ENCODE measurements at regions of chr6 and their contacts with region 1.

Region 1: GRCh38 chr6:7725849-7726415 is at the start of gene BMP6:
- DNase-seq: peak; percentile 93
- H3K4me3 ChIP-seq: peak within 1 kb of the TSS; percentile 61 to 70 (median 64)
- H3K27ac ChIP-seq: peak within 1 kb of the TSS in 1 of 4 donors; percentile 8
- H3K4me1 ChIP-seq: peaks cover 33 to 50% (median 48%) of the 10 kb centered on the region in 4 donors
- H3K27me3 ChIP-seq: peaks cover 0 to 84% (median 26%) of the 10 kb centered on the region in 4 donors
- CTCF ChIP-seq: no peak
- EP300 ChIP-seq: no peak
- POLR2A ChIP-seq: no peak
- total RNA-seq, gene BMP6: 5.1 to 10.0 (median 6.9) TPM

Region 2: DNA sequence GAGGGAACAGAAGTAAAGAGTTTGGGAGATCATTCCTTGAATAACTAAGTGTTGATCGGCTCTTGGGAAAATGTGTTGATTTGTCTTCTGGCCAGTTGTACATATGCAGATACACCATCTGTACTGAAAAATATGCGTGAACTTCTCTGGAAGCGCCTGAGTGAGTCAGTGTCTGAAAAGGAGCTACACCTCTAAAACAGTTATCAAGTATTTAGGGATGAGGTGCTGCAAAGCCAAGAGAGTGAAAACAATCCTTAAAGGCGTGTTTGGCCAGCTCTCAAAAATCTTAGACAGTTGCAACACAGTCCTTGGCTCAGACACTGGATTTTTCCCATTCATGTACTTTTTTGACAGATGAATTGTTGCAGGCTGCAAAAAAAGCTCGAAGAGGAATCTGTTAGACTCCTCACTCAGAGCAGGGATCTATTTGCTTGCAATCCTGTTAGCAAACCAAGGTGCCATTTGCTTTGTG is 61.2 kb after region 1 on chr6:
- intact Hi-C with region 1: loop called (anchors 5 kb)
- DNase-seq: no peak
- H3K4me3 ChIP-seq: peak overlapping the region in 2 of 4 donors; percentile 5 to 40
- H3K27ac ChIP-seq: peak overlapping the region; percentile 44 to 80 (median 72)
- H3K4me1 ChIP-seq: peaks cover 10 to 43% (median 39%) of the 10 kb centered on the region in 4 donors
- H3K27me3 ChIP-seq: no peaks in the 10 kb centered on the region
- CTCF ChIP-seq: no peak
- EP300 ChIP-seq: no peak
- POLR2A ChIP-seq: no peak

Region 3: DNA sequence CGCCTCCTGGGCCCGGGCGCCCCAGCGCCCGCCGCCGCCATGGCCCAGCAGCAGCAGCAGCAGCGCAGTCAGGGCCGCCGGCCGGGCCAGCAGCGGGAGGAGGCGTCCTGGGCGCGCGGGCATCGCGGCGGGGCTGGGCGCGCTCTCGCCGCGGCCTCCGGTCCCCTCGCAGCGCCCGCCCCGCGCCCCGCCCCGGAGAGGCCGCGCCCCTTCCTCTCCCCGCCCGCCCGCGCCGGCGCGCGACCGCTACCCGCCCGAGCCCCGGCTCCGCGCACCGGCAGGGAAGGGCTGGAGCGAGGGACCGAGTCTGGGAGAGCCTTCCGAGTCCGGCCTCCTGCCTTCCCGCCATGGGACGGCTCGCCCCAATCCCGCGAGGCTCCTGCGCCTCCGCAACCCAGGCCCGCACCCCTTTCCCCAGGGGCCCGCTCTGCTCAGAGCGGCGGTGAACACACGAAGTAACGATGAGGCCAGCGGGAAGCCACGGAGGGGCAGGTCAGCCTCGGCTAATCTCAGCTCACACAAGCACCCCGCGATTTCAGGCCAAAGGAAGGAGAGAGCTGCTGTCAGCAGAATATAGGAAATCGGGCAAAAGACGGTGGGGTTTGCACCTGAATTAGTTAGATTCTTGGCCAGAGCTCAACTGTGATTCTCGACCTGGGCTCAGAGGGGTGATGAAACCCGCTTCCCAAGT is 184.9 kb after region 1 on chr6 and contains the start of gene TXNDC5:
- intact Hi-C with region 1: loop called (anchors 2 kb)
- DNase-seq: no peak
- H3K4me3 ChIP-seq: peak within 1 kb of the TSS; percentile 77 to 97 (median 92)
- H3K27ac ChIP-seq: peak within 1 kb of the TSS; percentile 77 to 88 (median 86)
- H3K4me1 ChIP-seq: peaks cover 23 to 32% (median 25%) of the 10 kb centered on the region in 4 donors
- H3K27me3 ChIP-seq: no peaks in the 10 kb centered on the region
- CTCF ChIP-seq: no peak
- EP300 ChIP-seq: no peak
- POLR2A ChIP-seq: no peak
- total RNA-seq, gene TXNDC5: 61.5 to 116 (median 99.0) TPM

Region 4: GRCh38 chr6:8000188-8000596 is 274.3 kb after region 1 on chr6:
- intact Hi-C with region 1: loop called (anchors 5 kb)
- DNase-seq: no peak
- H3K4me3 ChIP-seq: no peak overlapping the region
- H3K27ac ChIP-seq: no peak overlapping the region
- H3K4me1 ChIP-seq: peaks cover 6 to 25% (median 19%) of the 10 kb centered on the region in 4 donors
- H3K27me3 ChIP-seq: no peaks in the 10 kb centered on the region
- CTCF ChIP-seq: no peak
- EP300 ChIP-seq: no peak
- POLR2A ChIP-seq: no peak

Region 5: DNA sequence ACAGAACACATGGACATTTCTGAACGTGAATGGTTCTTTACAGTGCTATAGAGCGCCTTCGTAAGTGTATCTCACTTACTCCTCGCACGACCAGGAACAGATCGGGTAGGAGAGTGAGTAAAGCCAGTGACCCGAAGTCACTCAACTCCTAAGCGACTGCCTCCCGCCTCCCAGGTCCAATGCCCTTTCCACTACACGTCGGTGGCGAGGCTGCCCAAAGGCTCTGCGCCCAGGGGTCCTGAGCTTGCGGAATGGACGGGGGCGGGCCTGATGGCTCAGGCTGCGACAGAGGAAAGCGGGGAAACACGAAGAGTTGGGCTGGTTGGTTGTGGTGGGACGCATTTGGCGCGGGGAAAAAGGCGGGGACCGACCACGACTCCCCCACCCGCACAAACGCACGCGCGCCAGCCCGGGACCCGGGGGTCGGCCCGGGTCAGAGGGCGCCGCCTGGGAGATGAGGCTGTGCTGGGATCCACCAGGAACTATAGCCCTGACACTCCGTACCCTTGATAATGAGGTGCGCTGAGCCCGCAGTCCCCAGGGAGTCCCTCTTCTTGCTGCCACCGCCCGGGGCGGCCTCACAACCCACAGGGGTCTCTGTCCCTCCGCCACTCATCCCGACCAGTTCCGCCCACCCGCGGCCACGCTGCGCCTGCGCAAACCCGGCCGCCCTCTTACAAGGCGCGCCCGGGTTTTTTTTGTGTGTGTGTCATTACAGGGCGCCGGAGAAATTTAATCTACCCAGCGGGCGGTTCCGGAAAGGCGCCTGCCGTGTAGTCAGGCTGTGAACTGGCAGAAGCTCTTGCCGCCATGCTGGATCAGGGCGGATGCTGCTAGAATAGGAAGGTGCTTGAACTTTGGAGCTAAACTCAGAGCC is 338.1 kb after region 1 on chr6 and contains the start of gene BLOC1S5:
- intact Hi-C with region 1: loop called (anchors 5 kb)
- DNase-seq: peak; percentile 98
- H3K4me3 ChIP-seq: peak within 1 kb of the TSS; percentile 72 to 95 (median 88)
- H3K27ac ChIP-seq: peak within 1 kb of the TSS; percentile 81 to 93 (median 90)
- H3K4me1 ChIP-seq: peaks cover 3 to 25% (median 19%) of the 10 kb centered on the region in 4 donors
- H3K27me3 ChIP-seq: no peaks in the 10 kb centered on the region
- CTCF ChIP-seq: peak in 2 of 3 experiments; percentile 12 to 21
- EP300 ChIP-seq: no peak
- POLR2A ChIP-seq: peak; percentile 65
- total RNA-seq, gene BLOC1S5: 10.4 to 15.6 (median 11.2) TPM

Region 6: DNA sequence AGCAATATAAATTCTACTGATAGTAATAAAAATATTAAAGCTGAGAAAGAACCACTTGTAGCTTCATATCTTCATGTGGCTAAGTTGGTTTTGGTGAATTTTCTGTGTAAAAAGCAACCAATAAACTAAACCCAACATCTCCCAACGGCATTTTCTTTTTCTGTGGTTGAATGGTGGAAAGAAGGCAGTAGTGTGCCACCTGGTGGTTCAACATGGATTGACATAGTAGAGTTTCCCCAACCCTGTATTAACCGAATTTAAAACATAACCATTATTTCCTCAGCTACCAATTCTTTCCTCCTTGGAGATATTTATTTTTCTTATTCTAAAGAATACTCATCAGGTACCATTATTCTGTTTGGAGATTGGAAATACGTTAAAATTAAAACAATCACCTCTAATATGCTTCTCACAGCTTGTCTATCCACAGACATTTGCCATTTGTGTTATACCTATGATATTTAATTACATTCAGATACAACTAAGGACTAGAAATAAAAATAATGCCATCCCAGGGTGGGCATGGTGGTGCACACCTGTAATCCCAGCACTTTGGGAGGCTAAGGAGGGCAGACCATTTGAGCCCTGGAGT is 493.5 kb after region 1 on chr6:
- intact Hi-C with region 1: loop called (anchors 10 kb)
- DNase-seq: no peak
- H3K4me3 ChIP-seq: no peak overlapping the region
- H3K27ac ChIP-seq: no peak overlapping the region
- H3K4me1 ChIP-seq: no peaks in the 10 kb centered on the region
- H3K27me3 ChIP-seq: no peaks in the 10 kb centered on the region
- CTCF ChIP-seq: peak; percentile 48 to 75 (median 70)
- EP300 ChIP-seq: no peak
- POLR2A ChIP-seq: no peak

Region 7: DNA sequence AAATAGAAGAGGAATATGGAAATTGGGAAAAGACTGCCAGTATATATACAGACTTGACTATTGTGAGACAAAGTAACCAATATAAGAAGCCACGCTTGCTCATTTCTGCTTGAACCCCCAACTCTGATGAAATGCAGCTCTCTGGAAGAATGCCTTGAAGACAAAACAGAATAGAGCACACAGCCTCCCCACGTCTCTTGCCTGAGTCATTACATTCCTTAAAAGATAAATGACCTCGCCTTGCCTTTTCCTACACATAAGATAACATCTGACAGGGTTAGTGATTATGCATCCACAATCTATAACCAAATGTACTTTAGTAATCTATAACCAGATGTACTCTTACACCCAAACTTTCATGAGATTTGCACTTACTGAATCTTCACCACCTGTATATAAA is 517.5 kb after region 1 on chr6:
- intact Hi-C with region 1: no loop called
- DNase-seq: no peak
- H3K4me3 ChIP-seq: no peak overlapping the region
- H3K27ac ChIP-seq: no peak overlapping the region
- H3K4me1 ChIP-seq: no peaks in the 10 kb centered on the region
- H3K27me3 ChIP-seq: peaks cover 0 to 23% (median 0%) of the 10 kb centered on the region in 4 donors
- CTCF ChIP-seq: no peak
- EP300 ChIP-seq: no peak
- POLR2A ChIP-seq: no peak